Activated CD4-positive, alpha-beta T cell treated with anti-CD3 and anti-CD28 coated beads for 36 hours (primary cell): ENCODE measurements at regions of chr4 and their contacts with region 1.

Region 1: DNA sequence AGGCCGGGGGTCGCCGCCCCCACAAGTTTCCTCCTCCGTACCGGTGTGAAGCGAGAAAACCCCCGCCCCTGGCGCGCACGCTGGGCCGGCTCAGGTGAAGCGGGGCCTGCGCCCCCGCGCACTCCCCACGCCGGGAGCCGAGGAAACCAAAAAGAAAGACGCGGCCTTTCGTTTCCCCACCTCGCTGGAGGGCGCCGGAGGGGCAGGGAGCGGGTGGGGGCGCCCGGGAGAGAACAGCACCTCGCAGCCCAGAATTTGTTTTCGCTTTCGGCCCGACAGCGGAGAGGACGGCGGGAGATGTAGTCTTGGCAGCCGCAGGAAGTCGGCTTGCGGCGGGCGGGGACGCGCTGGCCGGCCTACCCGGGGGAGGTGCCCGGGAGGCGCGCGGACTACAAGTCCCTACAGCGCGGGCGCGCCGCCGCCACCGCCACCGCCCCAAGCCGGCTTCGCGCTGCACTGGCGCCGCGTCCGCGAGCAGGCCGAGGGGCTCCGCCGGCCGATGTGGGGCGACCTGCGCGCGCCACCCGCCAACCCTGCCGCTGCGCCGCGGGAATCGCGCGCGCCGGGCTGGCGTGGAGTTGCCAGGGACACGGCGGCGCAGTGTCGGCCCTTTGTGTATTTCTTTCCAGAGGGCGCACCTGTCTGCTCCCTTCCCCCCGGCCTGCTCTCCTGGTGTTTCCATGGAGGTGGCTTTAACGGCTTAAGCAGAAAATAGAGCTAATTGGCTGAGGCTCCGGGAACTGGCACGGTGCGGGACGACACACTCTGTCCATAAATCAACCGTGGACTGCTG is at the start of gene OTUD4:
- DNase-seq: peak; percentile 97
- ATAC-seq: peak; percentile 84
- H3K4me3 Mint-ChIP-seq: peak within 1 kb of the TSS; percentile 91
- H3K27ac Mint-ChIP-seq: peak within 1 kb of the TSS; percentile 97
- H3K4me1 Mint-ChIP-seq: peaks cover 29% of the 10 kb centered on the region
- H3K27me3 Mint-ChIP-seq: no peaks in the 10 kb centered on the region
- total RNA-seq, gene OTUD4: 52.6 to 57.1 TPM

Region 2: DNA sequence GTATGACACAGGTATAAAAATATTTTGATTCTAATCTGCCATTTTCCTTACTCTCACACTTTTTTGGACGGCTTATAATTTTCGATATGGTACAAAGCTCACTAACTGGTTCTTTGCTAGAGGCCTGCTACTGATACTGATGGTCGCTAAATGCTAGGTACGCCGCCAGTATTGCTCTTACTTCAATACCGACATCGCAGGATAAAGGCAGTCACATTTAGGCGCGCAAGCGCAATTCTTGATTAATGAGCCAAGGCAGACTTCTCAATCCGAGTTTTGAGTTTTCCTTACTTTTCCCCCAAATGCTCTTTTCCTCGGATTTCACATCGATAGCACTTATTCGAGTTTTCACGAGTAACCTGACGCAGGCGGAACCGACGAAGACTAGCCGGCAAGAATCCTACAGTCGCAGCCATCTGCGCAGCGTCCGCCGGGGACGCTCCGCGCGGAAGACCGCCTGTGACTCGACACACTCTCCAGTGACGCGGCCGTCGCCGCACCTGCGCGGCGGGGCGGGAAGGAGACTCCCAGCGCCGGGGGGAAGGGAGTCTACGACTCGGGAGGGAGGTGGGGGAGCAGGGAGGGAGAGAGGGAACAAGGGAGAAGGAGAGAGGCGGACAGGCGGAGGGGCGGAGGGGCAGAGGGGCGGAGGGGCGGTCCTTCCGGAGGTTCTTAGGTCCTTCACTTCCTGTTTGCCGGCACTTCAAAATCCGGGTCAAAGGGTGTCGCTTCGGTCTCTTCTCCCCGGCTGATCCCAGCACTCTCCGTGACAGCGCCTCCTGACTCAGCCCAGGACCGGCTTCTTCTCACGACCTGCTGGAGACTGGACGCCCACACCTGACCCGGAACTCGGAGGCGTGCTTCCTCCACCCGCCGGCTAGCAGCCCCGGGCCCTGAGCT is 1996.0 kb before region 1 on chr4 and contains the start of gene USP38:
- CTCF ChIA-PET with region 1: no interaction called
- POLR2A ChIA-PET with region 1: no interaction called
- intact Hi-C with region 1: loop called in 1 of 2 experiments (anchors 10 kb)
- DNase-seq: peak; percentile 95
- ATAC-seq: peak; percentile 90
- H3K4me3 Mint-ChIP-seq: peak within 1 kb of the TSS; percentile 85
- H3K27ac Mint-ChIP-seq: peak within 1 kb of the TSS; percentile 97
- H3K4me1 Mint-ChIP-seq: peaks cover 38% of the 10 kb centered on the region
- H3K27me3 Mint-ChIP-seq: no peaks in the 10 kb centered on the region
- total RNA-seq, gene USP38: 17.4 to 20.0 TPM

Region 3: DNA sequence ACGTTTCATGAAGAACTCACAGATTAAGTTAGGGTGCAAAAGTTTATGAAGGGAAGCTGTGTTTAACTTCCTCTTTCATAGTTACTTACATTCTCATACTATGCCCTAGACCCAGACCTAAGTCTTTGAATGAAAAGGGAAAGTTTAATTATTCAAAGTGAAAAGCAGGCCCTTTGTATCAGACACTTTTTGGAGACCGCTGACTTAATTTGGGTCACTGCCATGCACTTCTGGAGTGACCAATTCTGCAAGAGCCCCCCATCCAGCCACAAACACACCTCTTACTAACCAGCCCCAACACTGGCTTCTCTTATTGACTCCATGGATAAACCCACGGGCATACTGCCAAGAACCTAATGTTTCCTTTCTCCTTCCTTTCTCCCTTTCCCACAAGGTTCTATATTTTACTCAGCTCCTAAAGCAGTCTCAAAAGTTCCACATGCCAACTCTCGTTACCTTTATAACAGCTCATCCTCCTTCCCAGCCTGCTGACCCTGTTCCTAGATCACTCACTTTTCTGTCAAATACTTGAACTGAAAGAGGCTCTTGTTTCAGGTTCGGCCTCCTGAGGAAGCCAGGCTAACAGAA is 47.9 kb before region 1 on chr4:
- CTCF ChIA-PET with region 1: no interaction called
- POLR2A ChIA-PET with region 1: no interaction called
- intact Hi-C with region 1: loop called (anchors 2 kb)
- DNase-seq: peak; percentile 48
- ATAC-seq: peak; percentile 63
- H3K4me3 Mint-ChIP-seq: no peak overlapping the region
- H3K27ac Mint-ChIP-seq: peak overlapping the region; percentile 68
- H3K4me1 Mint-ChIP-seq: peaks cover 45% of the 10 kb centered on the region
- H3K27me3 Mint-ChIP-seq: no peaks in the 10 kb centered on the region

Region 4: GRCh38 chr4:145487631-145488030 is 307.1 kb after region 1 on chr4:
- CTCF ChIA-PET with region 1: no interaction called
- POLR2A ChIA-PET with region 1: no interaction called
- intact Hi-C with region 1: loop called (anchors 1 to 2 kb)
- DNase-seq: peak; percentile 62
- ATAC-seq: peak; percentile 93
- H3K4me3 Mint-ChIP-seq: no peak overlapping the region
- H3K27ac Mint-ChIP-seq: no peak overlapping the region
- H3K4me1 Mint-ChIP-seq: peaks cover 20% of the 10 kb centered on the region
- H3K27me3 Mint-ChIP-seq: peaks cover 5% of the 10 kb centered on the region

Region 5: DNA sequence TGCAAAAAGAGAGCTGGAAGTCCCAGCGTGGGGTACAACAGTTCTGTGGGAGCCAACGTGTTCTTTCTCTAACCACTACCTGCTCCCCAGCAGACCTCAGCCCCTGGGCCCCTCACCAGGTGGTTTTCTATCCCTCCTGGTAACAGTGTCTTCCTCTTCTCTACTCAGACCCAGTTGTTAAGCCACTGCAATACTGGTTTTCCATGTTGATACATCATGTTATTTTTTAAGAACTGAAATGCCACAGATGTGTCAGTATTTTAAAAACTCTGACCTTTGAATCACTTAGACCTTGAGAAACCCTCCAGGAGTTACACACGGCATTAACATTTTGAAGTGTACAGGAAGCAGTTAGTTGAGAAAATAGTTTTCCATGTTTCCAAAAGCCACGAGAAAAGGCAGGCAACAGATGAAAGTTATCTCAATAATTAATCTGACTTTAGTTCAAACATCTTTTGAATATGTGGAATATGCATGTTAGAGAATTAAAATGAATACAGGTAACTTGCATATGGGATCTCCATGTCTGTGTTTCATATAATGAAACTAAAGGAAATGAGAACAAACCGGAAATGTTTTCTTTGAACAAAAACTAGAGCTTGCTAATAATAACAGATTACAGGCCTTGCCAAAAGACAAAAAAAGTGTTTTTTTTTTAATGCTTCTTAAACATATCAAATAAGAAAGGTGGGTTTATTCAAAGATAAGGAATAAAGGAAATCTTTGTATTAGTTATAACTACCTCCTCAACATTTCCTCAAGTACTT is 649.3 kb after region 1 on chr4:
- CTCF ChIA-PET with region 1: no interaction called
- POLR2A ChIA-PET with region 1: no interaction called
- intact Hi-C with region 1: loop called in 1 of 2 experiments (anchors 5 kb)
- DNase-seq: peak; percentile 68
- ATAC-seq: peak; percentile 68
- H3K4me3 Mint-ChIP-seq: peak overlapping the region; percentile 43
- H3K27ac Mint-ChIP-seq: peak overlapping the region; percentile 77
- H3K4me1 Mint-ChIP-seq: peaks cover 44% of the 10 kb centered on the region
- H3K27me3 Mint-ChIP-seq: no peaks in the 10 kb centered on the region

Region 6: GRCh38 chr4:146175541-146176453 is 995.3 kb after region 1 on chr4 and contains the start of gene LSM6:
- CTCF ChIA-PET with region 1: no interaction called
- POLR2A ChIA-PET with region 1: no interaction called
- intact Hi-C with region 1: loop called (anchors 1 to 10 kb)
- DNase-seq: peak; percentile 91
- ATAC-seq: peak; percentile 94
- H3K4me3 Mint-ChIP-seq: peak within 1 kb of the TSS; percentile 82
- H3K27ac Mint-ChIP-seq: peak within 1 kb of the TSS; percentile 85
- H3K4me1 Mint-ChIP-seq: peaks cover 49% of the 10 kb centered on the region
- H3K27me3 Mint-ChIP-seq: no peaks in the 10 kb centered on the region
- total RNA-seq, gene LSM6: 64.9 to 66.9 TPM